ENCODE measurements at regions of chr6 and their contacts with region 1.

Region 1: DNA sequence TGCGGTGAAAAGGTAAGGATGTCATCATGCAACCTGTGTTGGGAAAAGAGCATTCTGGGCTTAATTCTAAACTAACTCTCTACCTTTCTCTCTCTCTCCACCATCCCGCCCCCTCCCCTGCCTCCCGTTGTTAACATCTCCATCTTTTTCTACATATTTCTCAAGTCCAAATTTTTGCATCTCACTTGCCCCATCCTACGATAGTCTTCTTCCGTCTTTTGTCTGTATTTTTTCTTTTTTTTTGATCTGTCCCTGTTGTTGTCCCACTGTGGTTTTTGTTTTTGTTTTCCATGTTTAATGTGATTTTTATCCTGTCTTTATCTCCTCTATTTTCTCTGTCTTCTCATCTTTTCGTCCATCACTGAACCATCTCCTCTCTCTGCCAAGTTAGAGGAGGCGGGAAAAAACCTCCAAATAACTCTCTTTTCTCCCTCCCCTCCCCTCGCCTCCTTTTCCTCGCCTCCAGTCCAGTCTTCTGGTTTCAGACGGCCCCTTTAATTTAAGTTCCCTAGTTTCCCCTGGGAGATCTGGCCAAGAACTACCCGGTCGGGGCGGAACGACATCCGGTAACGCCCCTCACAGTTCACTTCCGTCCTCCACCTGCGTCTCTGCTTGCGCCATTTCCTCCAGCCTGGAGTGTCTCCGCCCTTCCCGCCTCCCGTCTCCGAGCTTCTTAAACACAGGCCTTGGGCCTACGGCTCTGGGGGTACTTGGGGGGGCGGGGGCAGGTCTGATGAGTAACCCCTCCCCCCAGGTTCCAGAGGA is at the start of gene NFKBIL1:
- DNase-seq: peak; percentile 90
- H3K4me3 ChIP-seq: peak within 1 kb of the TSS; percentile 50
- H3K27me3 ChIP-seq: no peaks in the 10 kb centered on the region
- CTCF ChIP-seq: no peak
- polyA plus RNA-seq, gene NFKBIL1: 10.8 and 13.6 TPM in 2 replicates

Region 2: DNA sequence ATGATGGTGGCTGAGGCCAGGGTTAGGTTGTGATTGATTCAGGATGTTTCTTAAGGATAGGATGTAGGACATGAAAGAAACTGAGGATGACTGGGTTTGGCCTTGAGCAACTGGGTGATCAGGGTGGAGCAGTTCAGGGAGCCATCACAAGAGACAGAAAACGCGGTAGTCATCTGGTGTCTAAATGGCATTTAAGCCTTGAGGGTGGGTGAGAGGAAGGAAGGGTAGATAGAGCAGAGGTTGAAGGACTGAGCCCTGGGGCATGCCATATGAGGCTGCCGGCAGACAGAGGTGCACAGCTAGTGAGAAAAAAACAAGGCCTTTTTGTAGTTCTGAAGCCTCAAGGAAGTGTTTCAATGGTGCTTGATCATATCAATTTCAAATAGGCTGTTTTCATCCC is 378.5 kb before region 1 on chr6:
- CTCF ChIA-PET with region 1: no interaction called
- POLR2A ChIA-PET with region 1: interaction called, 16 read pairs
- DNase-seq: no peak
- H3K4me3 ChIP-seq: no peak overlapping the region
- H3K27me3 ChIP-seq: no peaks in the 10 kb centered on the region
- CTCF ChIP-seq: no peak

Region 3: DNA sequence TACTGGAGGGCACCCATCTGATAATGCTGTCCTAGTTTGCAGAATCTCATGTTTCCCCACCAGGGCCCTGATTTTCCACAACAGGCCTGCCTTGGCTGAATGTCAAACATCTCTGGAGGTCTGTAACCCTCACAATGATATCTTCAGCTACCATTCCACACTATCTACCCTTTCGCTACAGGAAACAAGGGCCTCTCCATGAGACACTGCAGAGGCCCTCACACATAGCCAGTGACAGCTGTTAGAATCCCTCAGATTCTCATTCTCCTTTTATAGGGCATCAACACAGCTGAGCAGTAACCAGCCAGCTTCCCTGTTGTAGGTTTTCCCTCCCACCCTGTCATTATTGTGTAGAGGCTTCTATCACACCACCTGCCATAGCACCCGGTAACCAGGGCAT is 78.8 kb before region 1 on chr6:
- CTCF ChIA-PET with region 1: no interaction called
- POLR2A ChIA-PET with region 1: interaction called, 22 read pairs
- DNase-seq: no peak
- H3K4me3 ChIP-seq: no peak overlapping the region
- H3K27me3 ChIP-seq: peaks cover 5% of the 10 kb centered on the region; the same call in 1 of the 2 replicates
- CTCF ChIP-seq: no peak

Region 4: GRCh38 chr6:31493875-31494694 is 53.1 kb before region 1 on chr6:
- CTCF ChIA-PET with region 1: interaction called, 20 read pairs
- POLR2A ChIA-PET with region 1: interaction called, 5 read pairs
- DNase-seq: no peak
- H3K4me3 ChIP-seq: peak overlapping the region; percentile 71
- H3K27me3 ChIP-seq: no peaks in the 10 kb centered on the region
- CTCF ChIP-seq: peak; percentile 95

Region 5: GRCh38 chr6:31575335-31575901 is 28.3 kb after region 1 on chr6 and contains the start of gene TNF:
- CTCF ChIA-PET with region 1: interaction called, 156 read pairs
- POLR2A ChIA-PET with region 1: no interaction called
- DNase-seq: no peak
- H3K4me3 ChIP-seq: no peak within 1 kb of the TSS
- H3K27me3 ChIP-seq: no peaks in the 10 kb centered on the region; the same call in 1 of the 2 replicates
- CTCF ChIP-seq: no peak
- polyA plus RNA-seq, gene TNF: not detected in 2 replicates

Region 6: DNA sequence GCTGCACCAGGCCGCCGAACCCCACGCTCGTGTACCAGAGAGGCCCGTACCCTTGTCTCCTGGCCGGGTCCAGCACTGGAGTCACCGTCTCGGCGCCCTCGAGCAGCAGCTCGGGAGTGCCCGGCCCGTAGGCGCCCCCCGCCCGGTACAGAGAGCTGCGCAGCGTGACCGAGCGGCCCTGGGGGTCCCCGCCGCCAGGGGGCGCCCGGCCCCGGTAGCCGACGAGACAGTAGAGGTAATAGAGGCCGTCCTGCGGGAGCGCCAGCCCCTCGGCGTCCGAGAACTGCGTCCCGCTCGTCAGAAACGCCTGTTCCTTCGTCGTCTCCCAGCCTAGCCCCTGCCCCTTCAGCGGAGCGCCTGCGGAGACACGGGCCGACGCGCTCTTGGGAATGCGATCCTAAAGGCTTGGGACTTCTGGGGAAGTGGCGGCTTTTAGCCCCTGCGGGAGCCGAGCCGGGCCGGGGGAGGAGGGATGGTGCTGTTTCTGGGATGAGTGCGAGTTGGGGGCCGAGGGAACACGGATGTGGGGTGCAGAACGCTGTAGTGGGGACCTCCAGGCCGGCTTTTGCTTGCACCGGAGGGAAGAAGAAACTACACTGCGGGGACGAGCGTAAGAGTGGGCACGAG is 33.8 kb after region 1 on chr6:
- CTCF ChIA-PET with region 1: interaction called, 156 read pairs
- POLR2A ChIA-PET with region 1: no interaction called
- DNase-seq: no peak
- H3K4me3 ChIP-seq: peak overlapping the region; percentile 75
- H3K27me3 ChIP-seq: no peaks in the 10 kb centered on the region
- CTCF ChIP-seq: peak; percentile 88